Dorsolateral prefrontal cortex (tissue), 120 donors: ENCODE measurements at regions of chr2 and their contacts with region 1.

Region 1: DNA sequence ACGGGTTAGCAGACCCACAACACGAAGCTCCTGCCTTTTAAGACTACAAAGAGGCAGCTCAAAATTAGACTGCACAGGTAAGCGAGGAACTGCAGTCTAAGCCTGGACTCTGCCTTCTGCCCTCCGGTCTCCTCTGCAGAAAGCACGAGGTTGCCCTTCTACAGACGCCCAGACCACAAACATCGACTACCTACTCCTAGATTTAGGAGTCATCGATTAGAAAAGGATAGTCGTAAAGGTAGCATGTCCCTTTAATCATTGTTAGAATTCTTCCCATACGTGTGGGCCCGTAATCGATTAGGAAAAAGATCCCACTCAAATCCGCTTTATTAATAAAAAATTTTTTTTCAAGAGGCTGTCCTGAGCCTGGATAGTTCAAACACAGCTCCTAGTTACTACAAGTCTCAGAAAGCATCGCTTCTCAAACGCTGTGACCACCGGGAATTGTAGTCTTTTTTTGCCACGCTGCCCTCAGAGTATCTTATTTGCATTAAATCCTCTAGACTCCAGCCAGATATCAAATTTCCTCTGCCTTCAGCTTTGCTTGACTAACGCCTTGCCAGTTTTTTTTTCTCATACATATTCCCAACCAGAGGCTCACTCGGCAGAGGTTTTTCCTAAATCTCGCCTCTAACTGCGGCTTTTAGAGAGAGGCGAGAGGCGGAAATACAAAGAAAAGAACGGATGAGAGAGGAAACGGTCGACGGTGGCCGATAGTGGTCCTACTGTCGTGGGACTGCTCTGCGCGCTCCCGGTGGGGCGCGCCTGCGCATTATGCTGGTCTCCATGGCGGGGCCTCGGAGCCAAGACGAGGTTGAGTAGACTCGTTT is at the starts of genes CARF and WDR12:
- DNase-seq: peak; percentile 89 to 94 (median 92)
- H3K4me3 ChIP-seq: peak within 1 kb of the TSS; percentile 62 to 99 (median 83)
- H3K27ac ChIP-seq: peak within 1 kb of the TSS; percentile 70 to 99 (median 94)
- H3K27me3 ChIP-seq: no peaks in the 10 kb centered on the region
- CTCF ChIP-seq: peak in 11 of 56 donors; percentile 6 to 32 (median 17)
- total RNA-seq, gene CARF: 12.4 to 36.7 (median 25.8) TPM
- total RNA-seq, gene WDR12: 14.0 to 55.6 (median 34.3) TPM

Region 2: DNA sequence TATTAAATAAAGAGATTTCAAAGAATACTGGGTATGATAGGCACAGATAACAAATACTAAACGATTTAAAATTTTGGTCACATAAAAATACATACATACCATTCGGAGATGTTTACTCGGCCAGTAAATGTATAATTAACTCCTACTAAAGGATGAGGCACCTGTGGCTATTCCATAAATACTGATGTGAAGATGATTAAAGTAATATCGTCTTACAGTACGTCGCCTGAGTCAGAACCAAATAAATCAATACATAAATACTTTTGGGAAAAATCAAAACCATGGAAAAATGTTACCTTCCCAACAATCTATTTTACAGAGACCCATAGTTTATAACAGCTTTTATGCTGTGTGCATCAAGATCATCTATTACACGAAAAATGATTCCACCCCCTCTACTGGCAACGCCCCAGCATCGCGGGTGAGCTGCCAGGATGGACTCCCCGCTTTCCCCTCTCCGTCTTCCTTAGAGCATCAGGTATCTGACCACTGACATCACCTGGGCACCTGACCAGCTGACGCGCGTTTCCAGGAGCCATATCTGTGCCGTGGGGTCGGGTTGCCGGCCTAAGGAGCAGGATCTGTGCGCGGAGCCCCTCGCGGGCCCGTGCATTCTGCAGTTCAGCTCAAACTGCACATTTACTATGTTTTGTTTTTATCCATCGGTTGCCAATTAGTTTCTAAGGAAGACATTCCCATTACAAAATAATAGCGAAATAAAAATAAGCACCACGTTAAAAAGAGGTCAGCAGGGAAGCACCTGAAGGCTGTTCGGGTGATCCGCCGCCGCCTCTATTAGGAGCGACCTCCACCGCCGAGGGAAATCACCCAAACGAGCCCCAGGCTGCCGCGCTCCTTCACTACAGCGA is 41.1 kb before region 1 on chr2:
- intact Hi-C with region 1: loop called in 1 of 2 experiments (anchors 2 kb)
- DNase-seq: peak; percentile 29 to 91 (median 62)
- H3K4me3 ChIP-seq: peak overlapping the region; percentile 67 to 93 (median 82)
- H3K27ac ChIP-seq: peak overlapping the region; percentile 16 to 95 (median 82)
- H3K27me3 ChIP-seq: no peaks in the 10 kb centered on the region
- CTCF ChIP-seq: peak in 29 of 56 donors; percentile 2 to 42 (median 23)

Region 3: GRCh38 chr2:203014456-203015199 is 102.9 kb after region 1 on chr2 and contains the start of gene NBEAL1:
- intact Hi-C with region 1: loop called (anchors 5 kb)
- DNase-seq: peak; percentile 97 to 99 (median 98)
- H3K4me3 ChIP-seq: peak within 1 kb of the TSS; percentile 39 to 99 (median 84)
- H3K27ac ChIP-seq: peak within 1 kb of the TSS; percentile 59 to 97 (median 92)
- H3K27me3 ChIP-seq: no peaks in the 10 kb centered on the region
- CTCF ChIP-seq: peak in 25 of 56 donors; percentile 4 to 57 (median 23)
- total RNA-seq, gene NBEAL1: 14.1 to 45.8 (median 27.0) TPM